Activated CD8-positive, alpha-beta T cell treated with anti-CD3 and anti-CD28 coated beads, Interleukin-2, amount 10 ng/mL, durations not matched to agents 7 days and 5 days (primary cell): ENCODE measurements at regions of chr6 and their contacts with region 1.

Region 1: DNA sequence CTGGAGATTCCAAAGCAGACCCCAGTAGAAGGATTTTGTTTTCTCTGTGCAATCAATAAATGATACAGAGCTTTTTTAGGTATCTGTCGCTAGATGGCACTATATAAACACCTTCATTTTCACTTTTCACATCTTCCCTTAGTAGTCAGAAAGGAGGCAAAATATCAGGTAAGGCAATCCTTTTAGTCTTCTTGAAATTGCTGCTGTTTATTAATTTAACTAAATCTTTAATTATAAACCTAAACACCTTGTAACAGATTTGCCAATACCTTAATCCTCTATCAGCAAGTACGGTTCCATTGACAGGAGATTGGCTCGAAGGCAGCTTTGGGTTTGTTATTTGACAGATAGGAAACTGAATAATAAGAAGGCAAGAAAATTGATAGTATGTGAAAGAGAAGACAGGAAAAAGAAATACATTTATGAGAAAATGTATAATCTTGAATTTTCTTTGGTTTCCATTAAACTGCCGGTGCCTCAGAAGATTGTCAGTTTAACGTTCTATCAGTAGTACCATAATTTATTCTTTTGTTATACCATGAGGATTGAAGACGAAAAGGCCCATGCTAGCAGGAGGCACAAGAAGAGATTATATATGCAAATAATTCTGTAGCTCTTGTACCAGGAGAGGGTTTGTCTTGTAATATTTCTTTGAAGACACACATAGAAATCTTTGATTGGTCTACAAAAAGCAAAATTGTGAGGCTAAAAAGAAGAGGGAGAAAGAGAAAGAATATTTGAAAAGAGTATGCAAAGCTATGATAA is 23.5 kb upstream of the IBTK start:
- DNase-seq: no peak
- ATAC-seq: no peak
- H3K4me3 Mint-ChIP-seq: no peak overlapping the region
- H3K27ac Mint-ChIP-seq: no peak overlapping the region
- H3K4me1 Mint-ChIP-seq: no peaks in the 10 kb centered on the region
- H3K27me3 Mint-ChIP-seq: no peaks in the 10 kb centered on the region

Region 2: DNA sequence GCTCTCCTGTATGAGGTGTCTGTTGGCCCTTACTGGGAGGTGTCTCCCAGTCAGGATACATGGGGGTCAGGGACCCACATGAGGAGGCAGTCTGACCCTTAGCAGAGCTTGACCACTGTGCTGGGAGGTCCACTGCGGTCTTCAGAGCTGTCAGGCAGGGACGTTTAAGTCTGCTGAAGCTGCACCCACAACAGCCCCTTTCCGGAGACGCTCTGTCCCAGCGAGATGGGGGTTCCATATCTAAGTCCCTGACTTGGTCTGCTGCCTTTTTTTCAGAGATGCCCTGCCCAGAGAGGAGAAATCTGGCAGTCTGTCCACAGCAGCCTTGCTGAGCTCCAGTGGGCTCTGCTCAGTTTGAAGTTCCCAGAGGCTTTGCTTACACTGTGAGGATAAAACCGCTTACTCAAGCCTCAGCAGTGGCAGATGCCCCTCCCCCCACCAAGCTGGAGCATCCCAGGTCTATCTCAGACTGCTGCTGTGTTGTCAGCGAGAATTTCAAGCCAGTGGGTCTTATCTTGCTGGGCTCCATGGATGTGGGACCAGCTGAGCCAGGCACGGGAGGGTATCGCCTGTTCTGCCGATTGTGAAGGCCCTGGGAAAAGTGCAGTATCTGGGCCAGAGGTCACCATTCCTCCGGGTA is 12.8 kb after region 1 on chr6:
- CTCF ChIA-PET with region 1: interaction called, 11 read pairs
- POLR2A ChIA-PET with region 1: no interaction called
- DNase-seq: no peak
- ATAC-seq: no peak
- H3K4me3 Mint-ChIP-seq: no peak overlapping the region
- H3K27ac Mint-ChIP-seq: no peak overlapping the region
- H3K4me1 Mint-ChIP-seq: peaks cover 26% of the 10 kb centered on the region
- H3K27me3 Mint-ChIP-seq: no peaks in the 10 kb centered on the region

Region 3: GRCh38 chr6:83057705-83058321 is 786.8 kb after region 1 on chr6:
- CTCF ChIA-PET with region 1: interaction called, 28 read pairs
- POLR2A ChIA-PET with region 1: no interaction called
- DNase-seq: peak; percentile 37
- ATAC-seq: no peak
- H3K4me3 Mint-ChIP-seq: no peak overlapping the region
- H3K27ac Mint-ChIP-seq: no peak overlapping the region
- H3K4me1 Mint-ChIP-seq: no peaks in the 10 kb centered on the region
- H3K27me3 Mint-ChIP-seq: no peaks in the 10 kb centered on the region